CD4-positive, alpha-beta T cell (primary cell): ENCODE measurements at regions of chr12 and their contacts with region 1.

Region 1: GRCh38 chr12:34218165-34219045 is 196.1 kb downstream of the ALG10 start:
- DNase-seq: peak; percentile 27 to 80 (median 54)
- ATAC-seq: peak; percentile 83
- H3K4me3 ChIP-seq: peak overlapping the region; percentile 62
- H3K4me3 Mint-ChIP-seq: peak overlapping the region; percentile 91
- H3K27ac ChIP-seq: no peak overlapping the region
- H3K27ac Mint-ChIP-seq: no peak overlapping the region
- H3K4me1 ChIP-seq: peaks cover 14% of the 10 kb centered on the region
- H3K4me1 Mint-ChIP-seq: peaks cover 7% of the 10 kb centered on the region
- H3K27me3 ChIP-seq: peaks cover 3 to 5% of the 10 kb centered on the region in 2 experiments
- H3K27me3 Mint-ChIP-seq: peaks cover 15% of the 10 kb centered on the region
- CTCF ChIP-seq: peak; percentile 89

Region 2: DNA sequence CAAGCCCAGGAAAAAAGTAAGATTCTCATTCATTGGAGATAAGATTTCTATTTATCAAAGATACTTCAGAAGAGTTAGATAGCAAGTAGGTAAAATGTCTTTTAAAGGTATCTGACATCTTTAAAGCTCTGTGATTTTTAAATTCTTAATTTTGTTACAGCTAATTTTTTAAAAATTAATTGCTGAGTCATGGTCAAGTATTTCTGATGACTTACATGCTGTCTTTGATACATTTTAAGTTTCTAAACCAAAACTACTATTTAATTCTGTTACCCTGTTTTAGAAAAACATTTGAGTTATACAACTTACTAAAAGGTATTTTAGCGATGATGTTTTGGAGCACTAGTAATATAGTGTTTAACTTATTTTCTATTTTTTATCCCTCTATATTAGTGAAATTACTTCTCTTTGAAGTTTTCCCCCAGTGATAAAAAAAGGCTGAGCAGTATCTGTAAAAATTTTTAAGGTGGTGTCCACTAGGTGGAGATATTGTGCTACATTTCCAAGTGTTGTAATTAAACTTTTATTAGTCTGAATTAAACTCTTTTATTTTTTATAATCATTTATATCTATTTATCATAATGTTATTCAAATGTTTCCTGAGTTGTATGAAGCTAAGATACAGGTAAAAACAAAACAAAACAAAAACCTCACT is 184.7 kb before region 1 on chr12:
- CTCF ChIA-PET with region 1: no interaction called
- POLR2A ChIA-PET with region 1: no interaction called
- intact Hi-C with region 1: loop called (anchors 5 kb)
- DNase-seq: peak in 3 of 14 experiments; percentile 49 to 60 (median 60)
- ATAC-seq: peak; percentile 39
- H3K4me3 ChIP-seq: no peak overlapping the region
- H3K4me3 Mint-ChIP-seq: no peak overlapping the region
- H3K27ac ChIP-seq: no peak overlapping the region
- H3K27ac Mint-ChIP-seq: no peak overlapping the region
- H3K4me1 ChIP-seq: no peaks in the 10 kb centered on the region
- H3K4me1 Mint-ChIP-seq: no peaks in the 10 kb centered on the region
- H3K27me3 ChIP-seq: no peaks in the 10 kb centered on the region
- H3K27me3 Mint-ChIP-seq: no peaks in the 10 kb centered on the region
- CTCF ChIP-seq: peak; percentile 81

Region 3: GRCh38 chr12:34126239-34126641 is 92.2 kb before region 1 on chr12:
- CTCF ChIA-PET with region 1: no interaction called
- POLR2A ChIA-PET with region 1: no interaction called
- intact Hi-C with region 1: loop called (anchors 1 kb)
- DNase-seq: peak in 3 of 14 experiments; percentile 15 to 61 (median 21)
- ATAC-seq: no peak
- H3K4me3 ChIP-seq: peak overlapping the region; percentile 46
- H3K4me3 Mint-ChIP-seq: peak overlapping the region; percentile 69
- H3K27ac ChIP-seq: no peak overlapping the region
- H3K27ac Mint-ChIP-seq: no peak overlapping the region
- H3K4me1 ChIP-seq: peaks cover 15% of the 10 kb centered on the region
- H3K4me1 Mint-ChIP-seq: peaks cover 12% of the 10 kb centered on the region
- H3K27me3 ChIP-seq: no peaks in the 10 kb centered on the region
- H3K27me3 Mint-ChIP-seq: peaks cover 11% of the 10 kb centered on the region
- CTCF ChIP-seq: no peak